Calu3 (cell line): ENCODE measurements at regions of chr6 and their contacts with region 1.

Region 1: GRCh38 chr6:132768051-132768517 is 10.4 kb upstream of the VNN2 start:
- DNase-seq: peak; percentile 68
- H3K4me3 Mint-ChIP-seq: peak overlapping the region; percentile 43
- H3K27ac Mint-ChIP-seq: peak overlapping the region; percentile 9
- H3K4me1 Mint-ChIP-seq: peaks cover 32% of the 10 kb centered on the region
- H3K27me3 Mint-ChIP-seq: no peaks in the 10 kb centered on the region
- CTCF ChIP-seq: peak; percentile 95

Region 2: GRCh38 chr6:131640100-131640499 is 1128.0 kb before region 1 on chr6:
- CTCF ChIA-PET with region 1: no interaction called
- intact Hi-C with region 1: no loop called
- DNase-seq: no peak
- H3K4me3 Mint-ChIP-seq: no peak overlapping the region
- H3K27ac Mint-ChIP-seq: no peak overlapping the region
- H3K4me1 Mint-ChIP-seq: no peaks in the 10 kb centered on the region
- H3K27me3 Mint-ChIP-seq: no peaks in the 10 kb centered on the region
- CTCF ChIP-seq: no peak

Region 3: GRCh38 chr6:132530293-132530974 is 237.7 kb before region 1 on chr6:
- CTCF ChIA-PET with region 1: interaction called, 11 read pairs
- intact Hi-C with region 1: loop called (anchors 1 kb)
- DNase-seq: peak; percentile 76
- H3K4me3 Mint-ChIP-seq: peak overlapping the region; percentile 37
- H3K27ac Mint-ChIP-seq: peak overlapping the region; percentile 50
- H3K4me1 Mint-ChIP-seq: no peaks in the 10 kb centered on the region
- H3K27me3 Mint-ChIP-seq: no peaks in the 10 kb centered on the region
- CTCF ChIP-seq: peak; percentile 64

Region 4: DNA sequence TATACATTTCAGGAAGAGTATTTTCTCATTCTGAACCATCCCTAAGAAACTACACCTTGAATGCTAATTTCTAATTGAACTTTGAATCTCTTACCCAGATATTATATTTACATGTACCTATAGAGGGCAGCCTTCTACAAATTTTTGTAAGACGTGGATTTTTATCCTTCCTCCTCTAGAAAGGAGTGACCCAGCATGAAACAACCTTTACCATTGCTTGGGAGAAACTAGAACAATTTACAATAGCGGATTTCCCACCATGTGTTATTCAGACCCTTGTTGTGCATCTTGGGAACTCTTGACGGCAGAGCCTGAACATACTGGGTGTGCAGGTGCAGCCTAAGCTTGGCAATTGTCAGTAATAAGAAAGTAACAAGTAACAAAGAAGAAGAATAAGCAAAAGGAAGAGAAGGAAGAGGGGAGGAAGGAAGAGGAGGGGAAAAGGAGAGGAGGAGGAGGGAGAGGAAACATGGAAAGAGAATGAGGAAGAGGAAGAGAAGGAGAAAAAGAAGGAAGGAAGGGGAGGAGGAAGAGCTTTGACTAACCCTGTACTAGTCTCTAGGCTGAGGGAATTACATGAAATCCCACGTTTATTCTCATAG is 98.3 kb before region 1 on chr6:
- CTCF ChIA-PET with region 1: interaction called, 6 read pairs
- intact Hi-C with region 1: loop called (anchors 1 kb)
- DNase-seq: no peak
- H3K4me3 Mint-ChIP-seq: no peak overlapping the region
- H3K27ac Mint-ChIP-seq: peak overlapping the region; percentile 59
- H3K4me1 Mint-ChIP-seq: peaks cover 54% of the 10 kb centered on the region
- H3K27me3 Mint-ChIP-seq: no peaks in the 10 kb centered on the region
- CTCF ChIP-seq: peak; percentile 30

Region 5: DNA sequence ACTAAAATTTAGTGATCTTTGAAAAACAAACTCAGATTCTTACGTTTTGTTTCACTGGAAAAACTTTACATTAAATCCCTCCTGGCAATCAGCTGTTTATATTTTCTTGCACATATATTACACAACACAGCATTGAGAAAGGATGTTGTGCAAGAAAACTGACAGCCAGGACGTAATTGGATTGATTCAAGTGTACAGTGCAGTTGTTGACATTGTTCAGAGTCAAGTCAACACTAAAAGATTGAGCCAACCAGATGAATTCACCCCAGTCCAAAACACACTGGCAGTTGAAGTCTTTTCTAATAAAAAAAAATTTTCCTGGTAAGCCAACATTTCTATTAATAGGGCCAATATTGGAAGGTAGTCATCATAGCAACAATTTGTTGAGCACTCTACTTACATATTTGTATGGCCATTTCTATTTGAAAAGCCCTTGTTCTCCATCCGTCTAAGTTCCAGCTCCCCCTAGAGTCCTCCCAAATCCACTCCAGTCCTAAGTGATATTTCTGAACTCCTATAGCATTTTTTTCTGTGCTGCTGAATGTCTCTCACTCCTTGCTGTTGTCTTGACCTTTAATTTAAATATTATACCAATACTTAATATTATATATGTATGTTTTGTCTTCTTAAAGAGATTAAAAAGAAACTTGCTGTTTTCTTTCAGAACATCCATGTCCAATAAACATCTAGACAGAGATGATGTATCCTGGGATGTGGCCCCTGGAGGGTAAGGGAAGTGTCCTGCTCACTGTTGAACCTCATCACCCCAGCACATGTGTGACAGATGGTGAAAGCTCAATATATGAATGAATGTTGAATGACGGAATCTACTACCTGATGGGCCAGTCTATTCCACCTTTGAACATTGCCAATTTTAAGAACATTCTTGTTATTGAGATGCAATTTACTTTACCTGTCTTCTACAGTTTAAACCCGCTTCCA is 33.1 kb before region 1 on chr6:
- CTCF ChIA-PET with region 1: interaction called, 6 read pairs
- intact Hi-C with region 1: loop called (anchors 2 kb)
- DNase-seq: peak; percentile 31
- H3K4me3 Mint-ChIP-seq: no peak overlapping the region
- H3K27ac Mint-ChIP-seq: peak overlapping the region; percentile 83
- H3K4me1 Mint-ChIP-seq: peaks cover 65% of the 10 kb centered on the region
- H3K27me3 Mint-ChIP-seq: no peaks in the 10 kb centered on the region
- CTCF ChIP-seq: no peak

Region 6: DNA sequence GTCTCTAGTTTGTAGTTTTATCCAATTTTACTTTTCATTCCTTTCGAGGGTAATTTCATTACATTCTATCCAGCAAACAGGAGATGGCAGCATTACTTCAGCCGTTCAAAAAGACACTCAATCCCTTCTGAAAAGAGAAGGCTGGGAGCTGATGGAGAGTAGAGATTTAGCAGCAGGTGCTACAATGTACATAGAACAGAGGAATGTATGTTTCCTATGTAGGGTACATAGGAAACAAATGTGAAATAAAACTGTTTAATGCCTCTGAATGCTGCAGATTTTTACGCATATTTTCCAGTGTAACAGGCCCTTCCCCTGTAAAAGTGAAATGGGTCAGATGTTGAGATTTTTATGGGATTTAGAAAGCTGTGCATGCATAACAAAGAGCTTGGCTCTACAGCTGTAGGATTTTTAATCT is 62.3 kb after region 1 on chr6:
- CTCF ChIA-PET with region 1: no interaction called
- intact Hi-C with region 1: no loop called
- DNase-seq: peak; percentile 34
- H3K4me3 Mint-ChIP-seq: no peak overlapping the region
- H3K27ac Mint-ChIP-seq: no peak overlapping the region
- H3K4me1 Mint-ChIP-seq: no peaks in the 10 kb centered on the region
- H3K27me3 Mint-ChIP-seq: no peaks in the 10 kb centered on the region
- CTCF ChIP-seq: peak; percentile 48

Region 7: DNA sequence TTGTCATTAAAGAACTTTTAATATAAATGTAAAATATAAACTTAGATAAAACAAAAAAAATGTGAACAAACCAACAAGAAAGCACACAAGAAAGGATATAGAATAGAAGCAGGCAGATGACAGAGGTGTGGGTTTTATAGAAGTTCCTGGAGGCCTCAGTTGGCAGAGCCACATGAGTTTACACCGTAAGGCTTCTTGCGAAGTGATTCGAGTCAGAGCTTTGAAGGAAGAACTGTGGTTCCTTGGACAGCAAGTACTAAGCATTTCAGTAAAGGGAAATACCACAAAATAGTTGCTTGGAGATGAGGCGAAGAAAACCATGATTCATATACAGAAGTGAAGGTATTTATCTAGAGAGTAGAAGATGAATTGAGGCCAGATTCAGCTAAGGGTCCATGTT is 265.2 kb after region 1 on chr6:
- CTCF ChIA-PET with region 1: no interaction called
- intact Hi-C with region 1: no loop called
- DNase-seq: no peak
- H3K4me3 Mint-ChIP-seq: no peak overlapping the region
- H3K27ac Mint-ChIP-seq: no peak overlapping the region
- H3K4me1 Mint-ChIP-seq: no peaks in the 10 kb centered on the region
- H3K27me3 Mint-ChIP-seq: no peaks in the 10 kb centered on the region
- CTCF ChIP-seq: no peak